Cardiac septum (tissue), 1 donor: ENCODE measurements at regions of chr19 and their contacts with region 1.

Region 1: GRCh38 chr19:488505-489417 is 7.5 kb upstream of the MADCAM1 start:
- DNase-seq: peak; percentile 98

Region 2: GRCh38 chr19:383922-384798 is 104.6 kb before region 1 on chr19:
- intact Hi-C with region 1: loop called (anchors 5 kb)
- DNase-seq: no peak

Region 3: DNA sequence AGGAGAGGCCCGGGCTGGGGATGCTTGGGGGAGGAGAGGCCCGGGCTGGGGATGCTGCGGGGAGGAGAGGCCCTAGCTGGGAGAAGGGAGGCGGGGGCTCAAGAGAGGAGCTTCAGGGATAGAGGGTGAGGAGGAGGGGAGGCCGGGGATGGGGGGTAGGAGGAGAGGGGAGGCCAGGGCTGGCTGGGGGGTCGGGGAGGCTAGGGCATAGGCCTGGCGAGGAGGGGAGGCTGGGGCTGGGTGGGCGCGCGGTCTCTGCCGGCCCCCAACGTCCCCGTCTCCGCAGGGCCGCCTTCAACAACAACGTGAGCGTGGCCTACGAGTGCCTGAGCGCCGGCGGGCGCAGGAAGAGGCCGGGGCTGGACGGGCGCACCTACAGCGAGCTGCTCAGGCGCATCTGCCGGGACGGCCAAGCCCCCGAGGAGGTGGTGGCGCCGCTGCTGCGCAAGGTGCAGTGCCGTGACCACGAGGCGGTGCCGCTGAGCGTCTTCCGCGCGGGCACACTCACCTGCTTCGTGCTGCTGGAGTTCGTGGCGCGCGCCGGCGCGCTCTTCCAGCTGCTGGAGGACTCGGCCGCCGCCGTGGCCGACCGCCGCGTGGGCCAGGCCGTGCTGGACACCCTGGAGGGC is 30.0 kb after region 1 on chr19:
- intact Hi-C with region 1: no loop called
- DNase-seq: no peak